ENCODE measurements at regions of chr6 and their contacts with region 1.

Region 1: DNA sequence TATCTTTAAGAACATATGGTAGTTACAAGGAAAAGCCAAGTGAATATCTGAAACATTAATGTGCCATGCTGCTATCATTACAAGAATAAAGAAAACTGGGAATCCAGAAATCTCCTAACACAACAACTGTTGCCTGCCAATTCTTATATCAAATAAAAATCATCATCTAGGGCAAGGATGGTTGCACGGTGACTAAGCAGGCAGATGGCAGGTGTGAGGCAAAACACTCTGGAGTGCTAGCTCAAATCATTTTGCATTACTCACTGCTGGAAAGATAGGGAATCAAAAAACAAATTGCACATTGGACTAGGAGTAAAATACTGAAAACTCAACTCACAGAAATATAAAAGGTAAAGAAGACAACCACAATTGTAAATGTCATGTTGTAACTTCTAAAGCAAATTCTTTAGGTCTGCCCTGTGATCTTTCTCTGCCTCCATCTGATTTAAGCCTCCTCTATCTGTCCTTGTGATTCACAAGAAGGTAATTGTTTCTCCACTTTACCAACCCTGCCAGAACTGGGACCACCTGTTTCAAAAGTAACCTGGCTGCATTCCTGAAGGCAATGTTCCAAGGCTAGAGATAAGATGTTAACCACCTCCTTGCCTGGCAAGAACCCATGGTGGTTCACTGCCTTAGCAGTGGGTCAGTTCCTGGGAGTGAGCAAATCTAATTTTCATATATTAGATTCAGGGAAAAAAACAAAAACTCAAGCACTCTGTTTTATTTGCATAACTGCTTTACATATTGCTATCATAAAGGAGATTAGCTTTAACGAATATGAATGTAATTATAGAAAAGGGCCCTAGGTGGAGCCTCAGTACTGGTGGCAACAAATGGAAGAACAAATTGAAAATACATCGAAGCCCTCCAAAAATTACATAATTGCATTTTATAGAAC is 33.1 kb upstream of the LCA5 start:
- DNase-seq: no peak
- H3K4me3 Mint-ChIP-seq: no peak overlapping the region
- H3K27ac Mint-ChIP-seq: no peak overlapping the region
- H3K4me1 Mint-ChIP-seq: no peaks in the 10 kb centered on the region
- H3K27me3 Mint-ChIP-seq: no peaks in the 10 kb centered on the region

Region 2: DNA sequence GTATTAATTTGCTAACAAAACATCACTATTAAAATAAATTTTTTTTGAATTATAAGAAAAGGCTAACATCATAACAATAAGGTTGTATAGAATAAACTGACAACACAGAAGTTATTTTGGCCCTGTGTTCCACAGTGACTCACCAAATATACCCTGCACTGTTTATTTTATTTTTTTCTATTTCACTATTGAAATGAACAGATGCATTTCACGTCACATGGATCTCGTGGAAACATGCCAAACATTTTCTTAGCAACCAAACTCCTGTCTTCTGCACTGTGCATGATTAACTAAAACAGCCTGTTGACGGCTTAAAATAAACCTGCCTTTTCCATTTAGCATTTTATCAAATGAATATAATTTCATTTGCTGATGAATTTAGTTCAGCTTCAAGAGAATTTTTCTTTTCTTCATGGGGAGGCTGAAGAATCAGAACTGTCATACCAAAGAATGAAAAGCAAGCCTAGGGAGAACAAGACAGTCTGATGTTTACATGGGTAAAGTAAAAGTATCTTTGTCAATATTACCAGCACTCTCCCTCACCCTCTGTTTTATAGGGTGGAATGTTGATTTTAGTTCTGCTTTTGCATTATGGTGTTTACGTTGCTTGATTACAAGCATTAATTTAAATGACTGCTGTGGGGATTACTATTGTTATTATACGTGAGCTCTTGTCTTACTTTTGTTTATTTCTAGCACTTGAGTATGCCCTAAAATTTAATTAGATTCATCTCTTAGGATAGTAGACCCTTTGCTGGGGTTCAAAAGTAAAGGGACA is 148.5 kb before region 1 on chr6:
- CTCF ChIA-PET with region 1: no interaction called
- POLR2A ChIA-PET with region 1: no interaction called
- DNase-seq: no peak
- H3K4me3 Mint-ChIP-seq: no peak overlapping the region
- H3K27ac Mint-ChIP-seq: no peak overlapping the region
- H3K4me1 Mint-ChIP-seq: no peaks in the 10 kb centered on the region
- H3K27me3 Mint-ChIP-seq: peaks cover 3% of the 10 kb centered on the region

Region 3: GRCh38 chr6:79536954-79537747 is 33.2 kb before region 1 on chr6 and contains the start of gene LCA5:
- CTCF ChIA-PET with region 1: no interaction called
- POLR2A ChIA-PET with region 1: no interaction called
- DNase-seq: peak; percentile 80
- H3K4me3 Mint-ChIP-seq: no peak within 1 kb of the TSS
- H3K27ac Mint-ChIP-seq: no peak within 1 kb of the TSS
- H3K4me1 Mint-ChIP-seq: no peaks in the 10 kb centered on the region
- H3K27me3 Mint-ChIP-seq: peaks cover 16% of the 10 kb centered on the region
- total RNA-seq, gene LCA5: 0.10 to 0.15 TPM

Region 4: GRCh38 chr6:79672631-79673111 is 102.3 kb after region 1 on chr6:
- CTCF ChIA-PET with region 1: interaction called, 11 read pairs
- POLR2A ChIA-PET with region 1: no interaction called
- DNase-seq: no peak
- H3K4me3 Mint-ChIP-seq: no peak overlapping the region
- H3K27ac Mint-ChIP-seq: peak overlapping the region; percentile 79
- H3K4me1 Mint-ChIP-seq: peaks cover 23% of the 10 kb centered on the region
- H3K27me3 Mint-ChIP-seq: peaks cover 2% of the 10 kb centered on the region

Measured in activated CD4-positive, alpha-beta memory T cell treated with anti-CD3 and anti-CD28 coated beads, Interleukin-2, amount 10 ng/mL, durations not matched to agents 7 days and 5 days (primary cell).